A549 (cell line): ENCODE measurements at regions of chr5 and their contacts with region 1.

Region 1: DNA sequence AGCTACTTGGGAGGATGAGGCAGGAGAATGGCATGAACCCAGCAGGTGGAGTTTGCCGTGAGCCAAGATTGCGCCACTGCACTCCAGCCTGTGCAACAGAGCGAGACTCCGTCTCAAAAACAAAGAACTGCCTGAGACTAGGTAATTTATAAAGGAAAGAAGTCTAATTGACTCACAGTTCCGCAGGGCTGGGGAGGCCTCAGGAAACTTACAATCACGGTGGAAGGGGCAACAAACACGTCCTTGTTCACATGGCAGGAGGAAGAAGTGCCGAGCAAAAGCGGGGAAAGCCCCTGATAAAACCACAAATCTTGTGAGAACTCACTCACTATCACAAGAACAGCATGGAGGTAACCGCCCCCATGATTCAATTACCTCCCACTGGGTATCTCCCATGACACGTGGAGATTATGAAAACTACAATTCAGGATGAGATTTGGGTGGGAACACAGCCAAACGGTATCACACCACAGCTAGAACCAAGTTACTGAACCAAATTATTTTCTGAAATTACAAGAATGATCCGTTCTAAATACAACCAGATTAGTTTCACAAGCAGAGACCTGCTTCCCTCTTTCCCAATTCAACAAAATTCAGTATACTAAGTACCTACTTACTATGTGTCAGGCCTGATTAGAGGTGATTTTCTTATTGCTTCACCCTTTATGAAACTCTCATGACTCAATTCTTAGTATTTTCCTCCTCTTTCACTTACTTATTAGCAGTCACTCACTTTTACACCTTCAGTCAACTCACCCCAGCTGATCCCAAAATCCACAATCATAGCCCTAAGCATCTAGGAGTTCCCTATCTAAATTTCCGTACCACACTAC is 8.4 kb downstream of the UBTD2 start:
- DNase-seq: no peak
- ATAC-seq: no peak
- H3K4me3 ChIP-seq: no peak overlapping the region
- H3K27ac ChIP-seq: no peak overlapping the region
- H3K4me1 ChIP-seq: peaks cover 27% of the 10 kb centered on the region
- CTCF ChIP-seq: no peak
- EP300 ChIP-seq: no peak
- POLR2A ChIP-seq: no peak
- RAD21 ChIP-seq: no peak

Region 2: GRCh38 chr5:172245703-172246125 is 29.4 kb before region 1 on chr5:
- CTCF ChIA-PET with region 1: no interaction called
- POLR2A ChIA-PET with region 1: interaction called, 10 read pairs
- DNase-seq: no peak
- ATAC-seq: no peak
- H3K4me3 ChIP-seq: no peak overlapping the region
- H3K27ac ChIP-seq: no peak overlapping the region
- H3K4me1 ChIP-seq: 0 out of 3 replicates have a peak, but pooled peaks cover 5% of the 10 kb centered on the region
- CTCF ChIP-seq: no peak
- EP300 ChIP-seq: no peak
- POLR2A ChIP-seq: no peak
- RAD21 ChIP-seq: no peak

Region 3: GRCh38 chr5:172264815-172265395 is 10.2 kb before region 1 on chr5:
- CTCF ChIA-PET with region 1: no interaction called
- POLR2A ChIA-PET with region 1: no interaction called
- DNase-seq: no peak
- ATAC-seq: 0 out of 6 replicates have a peak, but pooled peaks of 1 of the 2 experiments have one; percentile 50
- H3K4me3 ChIP-seq: no peak overlapping the region
- H3K27ac ChIP-seq: no peak overlapping the region
- H3K4me1 ChIP-seq: 0 out of 3 replicates have a peak, but pooled peaks cover 4% of the 10 kb centered on the region
- CTCF ChIP-seq: no peak
- EP300 ChIP-seq: no peak
- POLR2A ChIP-seq: no peak
- RAD21 ChIP-seq: no peak